ENCODE measurements at regions of chr6 and their contacts with region 1.

Region 1: GRCh38 chr6:32177788-32178546 is at the start of gene RNF5:
- DNase-seq: peak; percentile 98
- H3K4me3 Mint-ChIP-seq: peak within 1 kb of the TSS; percentile 86
- H3K27ac Mint-ChIP-seq: peak within 1 kb of the TSS; percentile 95
- H3K4me1 Mint-ChIP-seq: peaks cover 59% of the 10 kb centered on the region
- H3K27me3 Mint-ChIP-seq: no peaks in the 10 kb centered on the region
- total RNA-seq, gene RNF5: 59.9 and 62.6 TPM in 2 replicates

Region 2: GRCh38 chr6:31246050-31246521 is 931.9 kb before region 1 on chr6:
- intact Hi-C with region 1: no loop called
- DNase-seq: no peak
- H3K4me3 Mint-ChIP-seq: no peak overlapping the region
- H3K27ac Mint-ChIP-seq: no peak overlapping the region
- H3K4me1 Mint-ChIP-seq: no peaks in the 10 kb centered on the region
- H3K27me3 Mint-ChIP-seq: peaks cover 33% of the 10 kb centered on the region

Region 3: GRCh38 chr6:31958741-31959739 is 218.9 kb before region 1 on chr6 and contains the starts of genes NELFE and SKIC2:
- intact Hi-C with region 1: loop called (anchors 5 kb)
- DNase-seq: peak; percentile 100
- H3K4me3 Mint-ChIP-seq: peak within 1 kb of the TSS; percentile 97
- H3K27ac Mint-ChIP-seq: peak within 1 kb of the TSS; percentile 95
- H3K4me1 Mint-ChIP-seq: peaks cover 36% of the 10 kb centered on the region
- H3K27me3 Mint-ChIP-seq: no peaks in the 10 kb centered on the region
- total RNA-seq, gene NELFE: 85.8 and 88.5 TPM in 2 replicates
- total RNA-seq, gene SKIC2: 92.8 and 93.7 TPM in 2 replicates

Region 4: GRCh38 chr6:32127717-32128592 is 50.0 kb before region 1 on chr6 and contains the start of gene ATF6B:
- intact Hi-C with region 1: loop called (anchors 1 kb)
- DNase-seq: peak; percentile 98
- H3K4me3 Mint-ChIP-seq: peak within 1 kb of the TSS; percentile 100
- H3K27ac Mint-ChIP-seq: peak within 1 kb of the TSS; percentile 96
- H3K4me1 Mint-ChIP-seq: peaks cover 39% of the 10 kb centered on the region
- H3K27me3 Mint-ChIP-seq: peaks cover 2% of the 10 kb centered on the region
- total RNA-seq, gene ATF6B: 72.9 and 81.0 TPM in 2 replicates

Region 5: DNA sequence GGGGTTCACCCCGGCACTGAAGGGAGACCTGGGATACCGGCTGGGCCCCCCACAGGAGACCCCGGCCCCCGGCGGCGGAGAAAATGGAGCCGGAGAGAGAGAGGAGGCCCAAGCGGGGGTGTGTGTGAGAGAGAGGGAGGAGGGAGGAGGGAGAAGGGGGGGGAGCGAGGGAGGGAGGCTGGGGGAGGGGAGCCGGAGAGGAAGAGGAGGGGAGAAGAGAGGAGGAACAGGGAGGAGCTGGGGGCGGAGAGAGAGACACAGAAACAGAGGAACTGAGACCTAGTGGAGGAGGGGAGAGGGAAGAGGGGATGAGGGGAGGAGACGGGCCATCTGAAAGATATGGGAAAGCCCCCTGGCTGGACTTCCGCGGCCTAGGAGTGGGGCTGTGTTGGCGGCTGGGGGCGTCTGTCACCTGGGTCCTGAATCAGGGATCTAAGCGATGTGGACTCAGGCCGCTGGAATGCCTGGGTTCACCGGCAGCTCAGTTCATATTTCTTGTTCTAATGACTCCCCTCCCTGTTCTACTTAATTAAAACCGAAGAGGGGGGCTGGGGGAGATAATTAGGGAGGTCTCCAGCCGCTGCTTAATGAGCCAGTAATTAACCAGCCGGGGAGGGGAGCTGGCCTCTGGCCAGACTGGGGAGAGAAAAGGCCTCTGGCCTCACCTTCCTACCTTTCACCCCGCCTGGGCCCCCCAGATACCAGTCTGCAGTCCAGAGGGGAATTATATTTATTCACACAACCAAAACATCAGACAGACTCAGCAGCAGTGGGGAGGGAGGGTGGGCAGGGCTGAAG is 12.3 kb after region 1 on chr6 and contains the start of gene PBX2:
- intact Hi-C with region 1: loop called (anchors 1 kb)
- DNase-seq: peak; percentile 94
- H3K4me3 Mint-ChIP-seq: peak within 1 kb of the TSS; percentile 97
- H3K27ac Mint-ChIP-seq: peak within 1 kb of the TSS; percentile 95
- H3K4me1 Mint-ChIP-seq: peaks cover 67% of the 10 kb centered on the region
- H3K27me3 Mint-ChIP-seq: no peaks in the 10 kb centered on the region
- total RNA-seq, gene PBX2: 88.1 and 92.7 TPM in 2 replicates

Region 6: DNA sequence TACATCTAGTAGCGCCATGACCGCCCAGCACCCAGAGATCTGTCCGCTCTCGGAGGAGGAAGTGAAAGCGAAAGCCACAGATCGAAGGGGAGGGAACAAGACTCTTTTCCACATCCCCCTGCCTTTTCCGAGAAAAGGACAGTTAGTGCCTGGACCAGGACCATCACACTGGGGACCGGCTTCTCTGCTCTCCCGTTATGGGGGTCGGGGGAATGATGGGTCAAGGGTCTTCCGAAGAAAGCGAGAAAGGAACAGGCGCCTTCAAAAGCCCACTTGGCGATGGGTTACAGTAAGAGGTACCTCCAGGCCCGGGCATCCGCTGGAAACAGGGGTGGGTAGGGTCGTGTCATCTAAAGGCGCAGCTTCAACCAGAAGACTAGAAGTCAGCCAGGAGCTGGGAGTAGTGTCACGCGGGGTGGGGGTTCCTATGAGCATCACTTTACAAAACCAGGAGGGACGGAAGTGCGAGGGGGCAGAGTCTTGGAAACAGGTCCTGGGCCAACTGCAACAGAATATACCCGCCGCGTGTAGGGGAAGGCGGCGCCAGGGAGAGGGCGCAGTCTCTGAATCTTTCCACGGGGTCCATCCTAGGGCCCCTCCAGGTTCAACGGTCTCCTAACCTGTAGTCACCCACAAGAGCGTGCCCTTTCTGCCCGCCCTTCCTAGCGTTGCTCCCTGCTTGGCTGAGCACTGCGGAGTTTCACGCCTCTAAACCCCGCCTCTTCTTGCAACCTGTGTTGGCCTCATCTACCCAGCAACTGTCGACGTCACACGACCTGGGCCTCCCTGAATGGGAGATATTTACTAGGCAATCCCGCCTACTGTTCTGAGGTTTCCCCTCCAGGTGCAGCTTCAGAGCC is 666.2 kb after region 1 on chr6 and contains the start of gene PSMB8:
- intact Hi-C with region 1: loop called (anchors 5 kb)
- DNase-seq: peak; percentile 99
- H3K4me3 Mint-ChIP-seq: peak within 1 kb of the TSS; percentile 99
- H3K27ac Mint-ChIP-seq: peak within 1 kb of the TSS; percentile 99
- H3K4me1 Mint-ChIP-seq: peaks cover 73% of the 10 kb centered on the region
- H3K27me3 Mint-ChIP-seq: no peaks in the 10 kb centered on the region
- total RNA-seq, gene PSMB8: 342 and 353 TPM in 2 replicates

Measured in activated CD4-positive, alpha-beta T cell treated with anti-CD3 and anti-CD28 coated beads, Interleukin-2, amount 10 ng/mL, durations not matched to agents 24 days and 14 days (primary cell).